Activated CD4-positive, alpha-beta T cell treated with anti-CD3 and anti-CD28 coated beads for 36 hours (primary cell): ENCODE measurements at regions of chr9 and their contacts with region 1.

Region 1: DNA sequence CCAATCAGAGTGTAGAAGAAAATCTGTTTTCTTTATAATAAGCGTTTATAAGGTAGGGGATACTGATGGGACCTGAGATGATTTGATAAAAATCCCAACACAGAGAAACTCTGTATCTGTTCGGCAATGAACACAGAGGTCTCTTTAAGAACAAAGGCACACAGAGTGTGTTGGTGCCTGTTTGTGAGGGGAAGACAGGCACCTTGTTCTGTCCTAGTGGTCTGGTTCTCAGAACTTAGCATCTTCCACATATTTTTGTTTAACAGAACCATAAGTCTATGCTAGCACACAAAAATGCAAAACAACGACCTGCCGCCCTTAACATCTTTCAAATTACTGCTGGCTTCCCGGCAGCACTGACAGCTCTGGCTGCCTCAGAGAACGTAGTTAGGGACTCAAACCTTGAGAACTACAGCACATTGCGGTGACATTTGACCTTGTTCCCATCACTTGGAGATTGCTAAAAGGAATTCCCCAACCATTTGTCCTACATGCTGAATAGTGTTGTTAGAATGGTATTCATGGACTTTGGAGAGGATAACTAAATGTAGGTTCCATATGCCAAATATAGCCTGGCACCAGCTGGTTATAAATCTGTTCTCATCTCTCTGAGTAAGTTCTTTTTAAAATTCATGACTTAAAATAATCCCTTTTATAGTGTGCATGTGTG is 871.7 kb upstream of the TYRP1 start:
- DNase-seq: no peak
- ATAC-seq: no peak
- H3K4me3 Mint-ChIP-seq: no peak overlapping the region
- H3K27ac Mint-ChIP-seq: no peak overlapping the region
- H3K4me1 Mint-ChIP-seq: no peaks in the 10 kb centered on the region
- H3K27me3 Mint-ChIP-seq: no peaks in the 10 kb centered on the region

Region 2: GRCh38 chr9:11758016-11758415 is 63.4 kb before region 1 on chr9:
- CTCF ChIA-PET with region 1: no interaction called
- POLR2A ChIA-PET with region 1: no interaction called
- intact Hi-C with region 1: loop called (anchors 10 kb)
- DNase-seq: no peak
- ATAC-seq: no peak
- H3K4me3 Mint-ChIP-seq: no peak overlapping the region
- H3K27ac Mint-ChIP-seq: no peak overlapping the region
- H3K4me1 Mint-ChIP-seq: no peaks in the 10 kb centered on the region
- H3K27me3 Mint-ChIP-seq: no peaks in the 10 kb centered on the region

Region 3: DNA sequence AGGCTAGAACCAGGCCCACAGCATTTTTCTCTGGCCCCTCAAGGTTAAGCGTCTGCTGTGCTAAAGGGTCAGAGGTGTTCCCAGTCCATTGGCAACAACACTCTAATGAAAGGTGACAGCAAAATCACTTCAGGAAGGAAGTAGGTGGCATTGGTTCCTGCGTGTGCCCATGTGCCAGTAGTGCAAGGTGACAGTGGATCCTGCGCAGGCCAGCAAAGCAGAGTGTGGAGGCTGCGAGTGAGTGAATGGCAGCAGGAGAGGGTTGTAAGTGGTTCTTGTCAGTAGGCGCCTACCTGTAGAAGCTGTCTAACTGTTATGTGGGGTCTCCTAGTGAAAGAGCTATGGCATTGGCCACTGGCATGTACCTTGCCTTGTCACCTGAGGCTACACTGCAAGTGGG is 26.5 kb before region 1 on chr9:
- CTCF ChIA-PET with region 1: no interaction called
- POLR2A ChIA-PET with region 1: no interaction called
- intact Hi-C with region 1: no loop called
- DNase-seq: no peak
- ATAC-seq: no peak
- H3K4me3 Mint-ChIP-seq: no peak overlapping the region
- H3K27ac Mint-ChIP-seq: no peak overlapping the region
- H3K4me1 Mint-ChIP-seq: no peaks in the 10 kb centered on the region
- H3K27me3 Mint-ChIP-seq: no peaks in the 10 kb centered on the region